Activated B cell treated with CpG ODN at 0.5 μM for 24 hours (primary cell): ENCODE measurements at regions of chr9 and their contacts with region 1.

Region 1: GRCh38 chr9:37119907-37120842 is at the start of gene ZCCHC7:
- DNase-seq: peak; percentile 93
- ATAC-seq: peak; percentile 94
- H3K4me3 Mint-ChIP-seq: peak within 1 kb of the TSS; percentile 99
- H3K27ac Mint-ChIP-seq: peak within 1 kb of the TSS; percentile 96
- H3K4me1 Mint-ChIP-seq: peaks cover 46% of the 10 kb centered on the region
- H3K27me3 Mint-ChIP-seq: no peaks in the 10 kb centered on the region
- CTCF ChIP-seq: no peak
- total RNA-seq, gene ZCCHC7: 70.3 and 70.8 TPM in 2 replicates

Region 2: DNA sequence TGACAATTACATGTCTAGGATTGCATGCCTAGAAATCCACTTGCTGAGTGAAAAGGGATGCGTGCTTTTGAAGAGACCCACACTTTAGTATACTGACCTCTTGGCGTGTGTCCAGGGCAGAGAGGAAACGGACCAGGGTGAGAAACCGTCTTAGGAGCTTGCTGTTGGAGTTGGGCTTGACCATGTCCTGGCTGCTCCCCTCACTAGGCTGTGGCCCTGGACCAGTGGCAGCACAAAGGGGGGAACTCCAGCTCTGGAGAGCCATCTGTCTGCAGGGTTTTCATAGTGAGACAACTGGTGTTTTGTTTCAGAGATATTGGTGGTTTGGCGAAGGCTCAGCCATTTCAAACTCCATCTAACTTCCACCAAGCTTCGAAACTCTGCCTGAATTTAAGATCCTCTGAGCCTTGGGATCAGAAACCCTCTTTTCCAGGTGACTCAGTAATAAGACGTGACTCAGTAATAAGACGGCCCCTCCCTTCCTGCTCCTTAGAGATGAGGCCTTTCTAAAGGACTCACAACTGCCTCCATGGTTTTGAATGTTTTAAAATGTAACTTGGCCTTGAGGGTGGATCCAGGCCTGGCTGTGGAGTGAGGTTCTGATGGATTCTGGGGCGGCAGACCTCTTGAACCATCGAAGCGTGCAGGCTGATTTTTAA is 381.7 kb before region 1 on chr9:
- CTCF ChIA-PET with region 1: no interaction called
- POLR2A ChIA-PET with region 1: no interaction called
- intact Hi-C with region 1: no loop called
- DNase-seq: no peak
- ATAC-seq: no peak
- H3K4me3 Mint-ChIP-seq: no peak overlapping the region
- H3K27ac Mint-ChIP-seq: no peak overlapping the region
- H3K4me1 Mint-ChIP-seq: peaks cover 9% of the 10 kb centered on the region
- H3K27me3 Mint-ChIP-seq: peaks cover 30% of the 10 kb centered on the region
- CTCF ChIP-seq: no peak

Region 3: DNA sequence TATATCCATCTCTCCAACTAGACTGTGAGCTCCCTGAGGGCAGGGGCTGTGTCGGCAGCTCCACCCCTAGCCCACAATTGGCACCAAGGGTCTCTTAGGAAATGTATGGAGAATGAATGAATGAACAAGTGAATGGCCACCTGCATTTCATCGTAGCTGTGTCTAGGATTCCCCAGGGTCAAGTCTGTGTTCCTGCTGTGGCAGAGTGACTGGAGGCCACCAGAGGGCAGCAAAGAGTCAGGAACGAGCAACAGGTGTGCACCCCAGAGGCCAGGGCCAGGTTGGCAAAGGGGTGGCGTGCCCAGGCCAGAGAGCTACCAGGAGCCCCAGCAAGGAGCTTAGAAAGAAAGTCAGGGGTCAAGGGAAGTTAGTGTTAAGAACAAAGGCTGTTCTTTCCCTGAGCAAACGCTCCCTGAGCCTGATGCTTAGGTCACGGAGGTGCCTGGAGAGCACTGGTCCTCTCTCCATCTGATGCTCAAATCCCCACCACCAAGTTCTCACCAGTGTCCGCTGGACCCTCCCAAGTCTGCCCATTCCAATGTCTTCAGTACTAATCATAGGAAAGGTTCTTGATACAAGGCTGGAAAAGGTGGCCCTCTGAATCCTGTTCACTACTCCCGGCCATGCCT is 246.8 kb before region 1 on chr9:
- CTCF ChIA-PET with region 1: no interaction called
- POLR2A ChIA-PET with region 1: no interaction called
- intact Hi-C with region 1: loop called (anchors 5 kb)
- DNase-seq: peak; percentile 52
- ATAC-seq: peak; percentile 77
- H3K4me3 Mint-ChIP-seq: no peak overlapping the region
- H3K27ac Mint-ChIP-seq: peak overlapping the region; percentile 87
- H3K4me1 Mint-ChIP-seq: peaks cover 63% of the 10 kb centered on the region
- H3K27me3 Mint-ChIP-seq: no peaks in the 10 kb centered on the region
- CTCF ChIP-seq: no peak

Region 4: DNA sequence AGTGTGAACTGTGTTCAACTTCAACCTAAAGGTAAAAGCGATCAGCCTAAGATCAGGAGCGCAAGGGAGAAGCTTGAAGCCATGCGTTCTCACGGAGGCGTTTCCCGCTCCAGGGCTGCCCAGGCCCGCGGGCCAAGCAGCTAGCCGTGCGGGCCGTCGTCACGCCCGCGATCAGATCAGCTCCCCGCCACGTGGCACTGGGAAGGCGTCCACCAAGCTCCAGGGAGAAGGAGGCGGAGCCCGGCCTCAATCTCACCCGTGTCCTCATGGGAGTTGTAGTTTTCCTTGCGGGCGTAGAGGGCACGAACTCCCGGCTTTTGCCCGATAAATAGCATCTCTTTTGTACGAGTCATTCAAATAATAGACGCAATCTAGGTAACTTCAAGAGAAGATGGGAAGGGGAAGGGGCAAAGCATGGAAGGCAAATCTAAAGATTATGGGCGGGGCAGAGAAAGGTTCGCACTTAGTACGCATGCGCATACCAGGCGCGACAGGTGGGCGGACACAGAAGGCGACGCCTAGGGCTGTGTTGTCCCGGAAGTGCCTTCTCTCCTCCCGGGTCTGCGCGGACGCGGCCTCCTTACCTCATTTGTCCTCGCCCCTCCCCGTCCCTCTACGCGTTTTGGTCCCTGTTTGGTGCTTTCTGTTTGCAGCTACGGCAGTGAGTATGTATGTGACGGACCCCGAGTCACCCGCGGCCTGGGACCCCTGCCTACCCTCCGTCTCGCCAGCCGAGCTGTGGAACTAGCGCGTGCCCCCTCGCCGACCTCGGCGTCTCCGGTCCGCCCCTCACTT is 40.6 kb before region 1 on chr9:
- CTCF ChIA-PET with region 1: no interaction called
- POLR2A ChIA-PET with region 1: interaction called, 51 read pairs
- intact Hi-C with region 1: loop called (anchors 1 kb)
- DNase-seq: peak; percentile 78
- ATAC-seq: peak; percentile 93
- H3K4me3 Mint-ChIP-seq: peak overlapping the region; percentile 94
- H3K27ac Mint-ChIP-seq: peak overlapping the region; percentile 95
- H3K4me1 Mint-ChIP-seq: peaks cover 78% of the 10 kb centered on the region
- H3K27me3 Mint-ChIP-seq: no peaks in the 10 kb centered on the region
- CTCF ChIP-seq: no peak

Region 5: DNA sequence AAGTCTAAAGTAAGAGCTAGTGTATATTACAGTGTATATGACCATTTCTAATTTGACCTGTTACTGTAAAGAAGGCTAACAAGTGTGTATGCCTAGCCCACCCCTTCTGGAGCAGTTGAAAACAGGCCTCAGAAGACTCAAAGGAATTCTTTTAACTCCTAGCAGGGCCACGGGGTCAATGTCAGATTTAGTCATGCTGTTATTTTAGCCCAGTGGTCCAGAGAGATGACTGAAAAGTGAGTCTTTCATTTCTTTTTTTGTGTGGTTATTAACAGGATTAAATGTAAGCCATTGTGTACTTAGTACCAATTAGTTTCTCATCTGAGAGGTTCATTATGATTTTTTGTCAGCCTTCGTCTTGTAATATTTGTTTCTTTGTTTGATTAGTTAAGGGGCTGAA is 24.6 kb after region 1 on chr9:
- CTCF ChIA-PET with region 1: no interaction called
- POLR2A ChIA-PET with region 1: interaction called, 15 read pairs
- intact Hi-C with region 1: loop called (anchors 2 kb)
- DNase-seq: no peak
- ATAC-seq: peak; percentile 25
- H3K4me3 Mint-ChIP-seq: peak overlapping the region; percentile 20
- H3K27ac Mint-ChIP-seq: peak overlapping the region; percentile 82
- H3K4me1 Mint-ChIP-seq: peaks cover 68% of the 10 kb centered on the region
- H3K27me3 Mint-ChIP-seq: no peaks in the 10 kb centered on the region
- CTCF ChIP-seq: no peak

Region 6: DNA sequence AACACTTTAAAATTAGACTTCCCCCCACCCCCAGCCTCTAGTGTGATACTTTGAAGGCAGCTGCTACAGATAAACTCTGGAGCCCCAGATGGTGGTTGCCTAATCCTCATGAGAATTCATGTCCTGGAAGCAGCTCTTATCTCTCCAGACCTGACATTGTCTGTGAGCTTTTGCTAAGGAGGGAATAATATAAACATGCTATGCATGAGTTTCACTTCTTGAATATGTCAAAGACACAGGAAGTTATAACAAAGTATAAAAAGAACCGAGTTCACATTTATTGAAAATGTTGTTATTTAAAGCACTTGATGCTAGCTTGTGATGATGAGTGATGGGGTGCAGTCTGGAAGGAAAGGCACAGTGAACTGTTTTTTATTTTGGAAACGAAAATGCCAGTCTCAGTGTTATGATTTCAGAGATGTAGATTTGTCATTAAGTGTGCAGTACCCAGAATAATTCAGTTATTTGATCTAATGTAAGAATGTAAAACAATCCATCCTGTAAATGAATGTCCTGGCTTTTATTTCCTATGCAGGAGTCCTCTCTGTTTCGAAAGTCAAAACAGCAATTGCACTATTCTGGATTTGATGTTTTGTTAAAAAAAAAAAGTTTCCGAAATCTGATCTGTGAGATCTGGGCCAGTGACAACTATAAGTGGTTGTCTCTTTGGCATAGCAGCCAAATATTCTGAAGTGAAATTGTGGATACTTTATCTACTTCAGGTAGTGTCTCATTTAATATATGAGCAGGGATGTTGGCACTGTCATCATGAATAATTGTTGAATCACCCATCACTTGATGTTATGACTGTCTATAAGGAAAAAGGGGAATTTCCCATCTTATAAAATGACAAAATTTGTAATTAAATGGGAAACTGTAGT is 77.2 kb after region 1 on chr9:
- CTCF ChIA-PET with region 1: no interaction called
- POLR2A ChIA-PET with region 1: interaction called, 25 read pairs
- intact Hi-C with region 1: loop called (anchors 2 kb)
- DNase-seq: no peak
- ATAC-seq: peak; percentile 72
- H3K4me3 Mint-ChIP-seq: peak overlapping the region; percentile 64
- H3K27ac Mint-ChIP-seq: peak overlapping the region; percentile 91
- H3K4me1 Mint-ChIP-seq: peaks cover 96% of the 10 kb centered on the region
- H3K27me3 Mint-ChIP-seq: no peaks in the 10 kb centered on the region
- CTCF ChIP-seq: no peak

Region 7: GRCh38 chr9:37302277-37302676 is 182.1 kb after region 1 on chr9:
- CTCF ChIA-PET with region 1: interaction called, 7 read pairs
- POLR2A ChIA-PET with region 1: interaction called, 36 read pairs
- intact Hi-C with region 1: loop called (anchors 2 kb)
- DNase-seq: no peak
- ATAC-seq: peak; percentile 84
- H3K4me3 Mint-ChIP-seq: peak overlapping the region; percentile 73
- H3K27ac Mint-ChIP-seq: peak overlapping the region; percentile 96
- H3K4me1 Mint-ChIP-seq: peaks cover 83% of the 10 kb centered on the region
- H3K27me3 Mint-ChIP-seq: no peaks in the 10 kb centered on the region
- CTCF ChIP-seq: no peak

Region 8: DNA sequence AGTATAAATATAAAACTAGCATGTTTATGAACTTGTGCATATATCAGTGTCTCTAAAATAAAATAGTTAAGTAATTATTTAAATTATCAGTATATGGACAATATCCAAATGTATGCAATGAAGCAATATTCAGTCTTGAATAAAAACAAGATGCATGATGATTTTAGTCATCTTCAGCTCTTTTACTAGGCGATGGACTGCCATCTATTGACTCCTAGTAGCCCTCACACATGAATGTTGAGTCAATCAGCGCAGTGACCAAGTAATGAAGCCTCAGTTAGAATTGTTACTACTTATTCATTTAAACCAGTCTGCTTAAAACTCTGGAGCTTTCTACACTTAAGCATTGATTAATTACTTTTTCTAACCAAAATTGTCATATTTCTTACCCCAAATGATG is 209.4 kb after region 1 on chr9:
- CTCF ChIA-PET with region 1: interaction called, 5 read pairs
- POLR2A ChIA-PET with region 1: interaction called, 36 read pairs
- intact Hi-C with region 1: loop called (anchors 1 kb)
- DNase-seq: no peak
- ATAC-seq: peak; percentile 47
- H3K4me3 Mint-ChIP-seq: peak overlapping the region; percentile 33
- H3K27ac Mint-ChIP-seq: peak overlapping the region; percentile 83
- H3K4me1 Mint-ChIP-seq: peaks cover 71% of the 10 kb centered on the region
- H3K27me3 Mint-ChIP-seq: no peaks in the 10 kb centered on the region
- CTCF ChIP-seq: no peak

Region 9: DNA sequence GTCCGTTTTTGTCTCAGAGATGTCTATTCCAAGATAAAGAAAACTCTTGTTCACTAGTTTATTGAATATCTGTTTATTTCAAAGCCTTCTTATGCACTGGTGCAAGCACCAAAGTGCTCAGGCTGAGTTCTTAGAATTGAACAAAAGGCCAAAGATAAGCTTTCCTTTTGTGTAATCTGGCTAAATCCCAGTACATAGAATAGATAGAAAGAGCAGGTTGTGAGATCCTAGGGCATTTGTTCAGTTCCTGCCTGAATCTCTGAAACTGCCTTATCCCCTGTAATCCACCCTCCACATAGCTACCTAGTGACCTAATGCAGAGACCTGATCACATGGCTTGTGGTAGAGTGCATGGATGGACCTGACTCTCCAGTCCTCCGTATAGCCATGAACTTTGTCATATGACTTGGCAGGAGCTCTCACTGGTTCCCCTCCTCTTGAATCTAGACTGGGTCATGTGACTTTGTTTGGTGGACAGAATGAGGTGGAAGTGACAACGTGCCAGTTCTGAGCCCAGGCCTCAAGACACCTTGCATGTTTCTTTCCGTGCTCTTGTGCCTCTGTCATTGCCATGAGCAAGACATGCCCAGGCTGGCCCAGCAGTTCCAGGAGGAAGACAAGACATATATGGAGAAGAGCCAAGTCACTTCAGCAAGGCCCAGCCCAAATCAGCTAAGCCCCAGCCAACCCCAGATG is 1088.2 kb after region 1 on chr9:
- CTCF ChIA-PET with region 1: no interaction called
- POLR2A ChIA-PET with region 1: no interaction called
- intact Hi-C with region 1: no loop called
- DNase-seq: no peak
- ATAC-seq: no peak
- H3K4me3 Mint-ChIP-seq: no peak overlapping the region
- H3K27ac Mint-ChIP-seq: no peak overlapping the region
- H3K4me1 Mint-ChIP-seq: no peaks in the 10 kb centered on the region
- H3K27me3 Mint-ChIP-seq: no peaks in the 10 kb centered on the region
- CTCF ChIP-seq: no peak